ENCODE measurements at regions of chr6 and their contacts with region 1.

Region 1: GRCh38 chr6:73129653-73130443 is 95.4 kb downstream of the KHDC1L start:
- DNase-seq: peak; percentile 60 to 89 (median 79)
- ATAC-seq: peak; percentile 99
- H3K4me3 ChIP-seq: no peak overlapping the region
- H3K27ac ChIP-seq: no peak overlapping the region
- H3K4me1 ChIP-seq: no peaks in the 10 kb centered on the region
- H3K27me3 ChIP-seq: no peaks in the 10 kb centered on the region
- CTCF ChIP-seq: peak; percentile 80 to 96

Region 2: GRCh38 chr6:72411872-72412708 is 717.8 kb before region 1 on chr6:
- intact Hi-C with region 1: loop called in 1 of 2 experiments (anchors 5 kb)
- DNase-seq: peak; percentile 61 to 89 (median 82)
- ATAC-seq: peak; percentile 100
- H3K4me3 ChIP-seq: no peak overlapping the region
- H3K27ac ChIP-seq: no peak overlapping the region
- H3K4me1 ChIP-seq: no peaks in the 10 kb centered on the region
- H3K27me3 ChIP-seq: peaks cover 0 to 18% of the 10 kb centered on the region in 2 donors
- CTCF ChIP-seq: peak; percentile 97 to 100

Region 3: GRCh38 chr6:72622094-72622940 is 507.5 kb before region 1 on chr6:
- intact Hi-C with region 1: loop called in 1 of 2 experiments (anchors 10 kb)
- DNase-seq: peak; percentile 15 to 86 (median 33)
- ATAC-seq: peak; percentile 51
- H3K4me3 ChIP-seq: peak overlapping the region; percentile 36 to 45
- H3K27ac ChIP-seq: no peak overlapping the region
- H3K4me1 ChIP-seq: peaks cover 16 to 37% of the 10 kb centered on the region in 2 donors
- H3K27me3 ChIP-seq: peaks cover 19 to 34% of the 10 kb centered on the region in 2 donors
- CTCF ChIP-seq: peak in 1 of 2 donors; percentile 28

Region 4: DNA sequence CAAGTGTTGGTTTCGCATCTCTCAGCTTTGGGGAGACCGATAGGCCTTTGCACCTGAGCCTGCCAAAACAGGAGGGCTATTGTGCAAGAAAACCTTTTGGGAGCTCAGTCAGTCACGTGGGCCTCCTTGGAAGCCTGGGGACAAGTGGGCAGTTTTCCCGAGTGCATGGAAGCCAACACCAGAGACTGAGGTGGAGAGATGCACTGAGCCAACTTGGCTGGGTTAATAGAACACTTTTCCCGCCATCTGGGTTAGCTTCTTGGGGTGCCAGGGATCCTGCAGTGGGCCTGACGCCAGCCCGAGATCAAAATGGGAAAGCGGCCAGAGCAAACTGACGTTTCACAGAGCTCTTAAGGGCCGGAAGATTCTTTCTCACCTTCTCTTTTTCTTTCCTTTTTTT is 242.7 kb after region 1 on chr6:
- intact Hi-C with region 1: no loop called
- DNase-seq: no peak
- ATAC-seq: no peak
- H3K4me3 ChIP-seq: no peak overlapping the region
- H3K27ac ChIP-seq: no peak overlapping the region
- H3K4me1 ChIP-seq: no peaks in the 10 kb centered on the region
- H3K27me3 ChIP-seq: no peaks in the 10 kb centered on the region
- CTCF ChIP-seq: no peak